ENCODE measurements at regions of chr1 and their contacts with region 1.

Region 1: DNA sequence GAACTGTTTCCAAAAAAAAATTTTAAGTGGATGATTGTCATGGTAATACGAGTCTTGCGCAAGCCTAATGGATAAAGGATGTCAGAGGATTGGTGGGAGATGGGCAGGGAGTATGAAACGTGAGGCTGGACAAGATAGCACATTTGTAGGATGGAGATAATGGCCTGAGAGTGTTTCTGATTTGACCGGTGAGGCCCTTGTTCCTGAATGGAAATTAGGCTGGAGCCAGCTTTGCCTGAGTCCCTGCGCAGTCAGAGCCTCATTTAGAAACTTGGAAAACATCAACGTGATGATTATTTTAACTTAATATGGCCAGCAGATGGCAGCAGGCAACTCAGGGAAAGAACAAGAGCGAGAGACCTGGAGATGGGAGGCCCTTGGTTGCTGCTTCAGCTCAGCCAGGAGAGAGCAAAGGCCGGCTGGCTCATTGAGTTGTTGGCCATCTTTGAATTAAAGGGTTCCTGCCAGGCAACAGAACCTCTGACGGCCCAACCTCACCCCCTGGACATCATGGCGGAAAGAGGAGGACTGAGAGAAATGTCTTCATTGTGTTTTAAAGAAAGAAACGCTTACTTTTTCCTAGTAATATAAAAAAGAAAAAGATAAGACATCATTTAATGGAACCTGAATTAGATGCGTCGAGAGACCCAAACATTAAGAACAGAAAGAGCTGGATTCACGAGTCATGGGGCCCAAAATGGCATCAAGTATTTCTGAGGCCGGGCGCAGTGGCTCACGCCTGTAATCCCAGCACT is 80.3 kb downstream of the SELENOF start:
- DNase-seq: peak; percentile 74 to 80
- H3K4me3 ChIP-seq: no peak overlapping the region
- H3K4me3 Mint-ChIP-seq: no peak overlapping the region
- H3K27ac Mint-ChIP-seq: no peak overlapping the region
- H3K4me1 ChIP-seq: peaks cover 10% of the 10 kb centered on the region
- H3K4me1 Mint-ChIP-seq: peaks cover 25% of the 10 kb centered on the region
- H3K27me3 ChIP-seq: no peaks in the 10 kb centered on the region
- H3K27me3 Mint-ChIP-seq: no peaks in the 10 kb centered on the region
- CTCF ChIP-seq: peak; percentile 40 to 47

Region 2: DNA sequence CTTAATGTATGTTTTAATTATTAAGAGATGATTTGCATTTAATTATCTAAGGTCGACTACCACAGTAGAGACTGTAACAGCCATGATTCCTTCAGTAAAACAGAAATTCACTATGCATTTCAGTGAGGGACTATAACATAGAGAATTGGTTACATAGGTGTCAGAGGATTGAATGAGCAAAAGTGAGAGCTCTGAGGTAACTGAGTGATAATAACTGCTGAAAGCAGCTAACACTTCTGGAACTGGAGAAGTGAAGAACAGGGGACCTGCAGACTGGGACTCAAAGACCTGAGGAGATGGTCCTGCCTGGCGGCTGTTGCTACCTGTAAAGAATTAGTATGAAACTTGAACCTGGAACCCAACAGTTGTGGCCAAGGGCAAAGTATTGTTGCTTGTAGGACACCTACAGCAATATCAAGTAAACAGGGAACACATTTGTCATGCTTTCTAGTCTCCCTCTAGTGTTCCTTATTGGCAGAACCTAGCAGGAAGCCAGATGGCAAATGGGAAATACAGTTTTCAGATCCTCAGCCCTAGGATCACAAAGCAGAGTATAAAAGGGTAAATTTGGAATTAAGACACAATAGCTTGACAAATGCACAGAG is 191.4 kb after region 1 on chr1:
- CTCF ChIA-PET with region 1: no interaction called
- POLR2A ChIA-PET with region 1: no interaction called
- intact Hi-C with region 1: loop called (anchors 1 kb)
- DNase-seq: peak in 1 of 2 experiments; percentile 36
- H3K4me3 ChIP-seq: no peak overlapping the region
- H3K4me3 Mint-ChIP-seq: no peak overlapping the region
- H3K27ac Mint-ChIP-seq: no peak overlapping the region
- H3K4me1 ChIP-seq: no peaks in the 10 kb centered on the region
- H3K4me1 Mint-ChIP-seq: peaks cover 14% of the 10 kb centered on the region
- H3K27me3 ChIP-seq: no peaks in the 10 kb centered on the region
- H3K27me3 Mint-ChIP-seq: no peaks in the 10 kb centered on the region
- CTCF ChIP-seq: peak; percentile 22 to 48

Region 3: GRCh38 chr1:87084244-87084836 is 250.7 kb after region 1 on chr1:
- CTCF ChIA-PET with region 1: no interaction called
- POLR2A ChIA-PET with region 1: no interaction called
- intact Hi-C with region 1: loop called (anchors 1 kb)
- DNase-seq: no peak
- H3K4me3 ChIP-seq: no peak overlapping the region
- H3K4me3 Mint-ChIP-seq: no peak overlapping the region
- H3K27ac Mint-ChIP-seq: no peak overlapping the region
- H3K4me1 ChIP-seq: no peaks in the 10 kb centered on the region
- H3K4me1 Mint-ChIP-seq: no peaks in the 10 kb centered on the region
- H3K27me3 ChIP-seq: no peaks in the 10 kb centered on the region
- H3K27me3 Mint-ChIP-seq: no peaks in the 10 kb centered on the region
- CTCF ChIP-seq: peak; percentile 5 to 29

Measured in Caco-2 (cell line).